ENCODE measurements at regions of chr11 and their contacts with region 1.

Region 1: DNA sequence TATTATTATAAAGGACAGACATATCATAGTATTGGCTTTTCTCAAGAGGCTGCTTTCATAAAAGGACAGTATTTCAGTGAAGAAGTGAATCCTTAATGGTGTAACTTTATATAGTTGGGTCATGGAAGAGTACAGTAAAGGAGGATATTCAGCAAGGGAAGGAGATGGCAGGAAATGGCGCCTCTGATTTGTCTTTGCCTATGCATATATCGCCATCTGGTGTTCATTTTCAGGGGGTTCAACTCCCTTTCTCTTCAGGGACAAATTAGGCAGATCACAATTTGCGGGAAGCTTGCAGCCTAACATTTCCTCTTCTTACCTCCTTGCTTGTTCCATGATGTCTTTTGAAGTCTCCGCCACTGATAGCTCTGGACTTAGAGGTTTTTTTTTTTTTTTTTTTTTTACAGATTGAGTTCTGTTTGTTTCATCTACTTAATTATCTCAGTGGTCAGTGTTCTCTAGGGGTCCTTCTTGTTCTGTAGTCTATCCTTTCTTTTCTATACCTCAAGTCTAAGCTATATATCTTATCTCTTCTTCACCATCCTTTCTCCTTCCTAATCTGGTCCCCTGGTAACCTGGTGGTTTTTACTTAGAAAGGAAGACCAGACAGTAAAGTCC is 21.8 kb upstream of the RRM1 start:
- DNase-seq: peak; percentile 62
- H3K4me3 Mint-ChIP-seq: no peak overlapping the region
- H3K27ac Mint-ChIP-seq: no peak overlapping the region
- H3K4me1 Mint-ChIP-seq: no peaks in the 10 kb centered on the region
- H3K27me3 Mint-ChIP-seq: no peaks in the 10 kb centered on the region
- CTCF ChIP-seq: peak; percentile 71

Region 2: DNA sequence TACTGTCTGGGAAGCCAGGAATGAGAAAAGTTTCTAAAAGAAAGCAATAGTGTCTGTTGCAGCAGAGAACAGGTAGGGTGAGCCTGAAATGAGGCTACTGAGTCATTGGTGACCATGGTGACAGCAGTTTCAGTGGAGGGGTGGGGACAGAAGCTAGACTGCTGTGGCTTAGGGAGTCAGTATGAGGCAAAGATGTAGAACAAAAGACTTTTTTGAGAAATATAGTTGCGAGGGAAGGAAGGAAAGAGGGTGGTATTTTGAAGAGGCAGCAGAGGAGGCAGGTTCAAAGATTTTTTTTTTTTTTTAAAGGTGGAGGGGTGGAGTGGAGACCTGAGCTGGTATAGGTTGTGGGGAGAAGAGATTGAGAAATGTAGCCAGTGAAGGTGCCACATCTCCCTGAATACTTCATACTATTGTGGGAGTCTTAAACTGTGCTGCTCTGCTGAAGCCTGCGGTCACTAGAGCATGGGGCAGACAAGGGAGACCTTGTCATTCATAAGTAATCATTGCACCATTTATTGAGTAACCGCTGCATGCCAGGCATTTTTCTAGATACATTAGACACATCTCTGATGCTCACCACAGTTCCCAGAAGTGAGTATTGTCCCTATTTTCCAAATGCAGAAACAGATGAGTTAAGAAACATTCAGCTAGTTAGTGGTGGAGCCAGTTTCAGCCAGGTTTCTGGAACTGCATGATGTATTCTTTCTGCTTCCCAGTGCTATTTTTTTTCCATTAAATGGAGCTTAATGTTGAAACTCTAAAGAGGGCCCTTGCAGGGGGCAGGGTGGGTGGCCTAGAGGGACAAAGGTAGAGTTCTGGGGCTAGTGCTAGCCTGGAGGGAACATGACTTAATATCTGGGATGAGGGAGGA is 167.5 kb before region 1 on chr11:
- CTCF ChIA-PET with region 1: no interaction called
- intact Hi-C with region 1: no loop called
- DNase-seq: peak; percentile 82
- H3K4me3 Mint-ChIP-seq: peak overlapping the region; percentile 56
- H3K27ac Mint-ChIP-seq: peak overlapping the region; percentile 95
- H3K4me1 Mint-ChIP-seq: peaks cover 60% of the 10 kb centered on the region
- H3K27me3 Mint-ChIP-seq: no peaks in the 10 kb centered on the region
- CTCF ChIP-seq: no peak

Region 3: GRCh38 chr11:3929649-3930048 is 143.1 kb before region 1 on chr11:
- CTCF ChIA-PET with region 1: no interaction called
- intact Hi-C with region 1: loop called (anchors 5 kb)
- DNase-seq: no peak
- H3K4me3 Mint-ChIP-seq: no peak overlapping the region
- H3K27ac Mint-ChIP-seq: no peak overlapping the region
- H3K4me1 Mint-ChIP-seq: peaks cover 9% of the 10 kb centered on the region
- H3K27me3 Mint-ChIP-seq: no peaks in the 10 kb centered on the region
- CTCF ChIP-seq: no peak

Region 4: DNA sequence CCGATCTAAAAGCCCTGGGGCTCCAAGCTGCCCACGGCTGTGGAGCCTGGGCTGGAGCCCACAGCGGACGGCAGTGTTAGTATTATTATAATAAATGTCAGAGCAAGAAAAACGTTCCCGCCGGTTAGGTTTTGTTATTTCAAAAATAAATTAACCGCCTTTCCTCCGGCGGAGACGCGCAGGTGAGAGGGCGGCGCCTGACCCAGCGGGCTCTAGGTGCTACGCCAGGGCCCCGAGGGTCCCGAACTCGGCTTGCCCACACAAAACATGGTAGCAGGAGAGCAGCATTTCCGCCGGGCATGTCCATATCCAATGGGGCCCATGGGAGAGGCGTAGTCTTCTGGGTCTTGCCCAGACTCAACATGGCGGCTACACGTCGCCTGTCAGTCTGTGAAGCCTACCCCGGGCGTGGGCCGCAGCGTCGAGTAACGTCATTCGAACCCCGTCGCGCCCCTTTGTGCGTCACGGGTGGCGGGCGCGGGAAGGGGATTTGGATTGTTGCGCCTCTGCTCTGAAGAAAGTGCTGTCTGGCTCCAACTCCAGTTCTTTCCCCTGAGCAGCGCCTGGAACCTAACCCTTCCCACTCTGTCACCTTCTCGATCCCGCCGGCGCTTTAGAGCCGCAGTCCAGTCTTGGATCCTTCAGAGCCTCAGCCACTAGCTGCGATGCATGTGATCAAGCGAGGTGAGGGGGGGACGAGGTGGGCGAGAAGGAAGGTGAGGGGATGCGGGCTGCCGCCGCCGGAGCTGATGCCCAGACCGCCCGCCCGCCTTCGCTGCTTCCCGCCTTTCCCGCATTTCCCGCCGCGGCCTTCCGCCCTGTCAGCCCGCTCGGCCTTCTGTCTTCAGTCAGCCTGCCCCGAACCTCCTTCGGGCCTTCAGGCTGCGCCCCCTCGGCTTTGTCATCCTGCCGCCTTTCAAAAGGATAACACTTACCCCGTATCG is 21.8 kb after region 1 on chr11 and contains the start of gene RRM1:
- CTCF ChIA-PET with region 1: no interaction called
- intact Hi-C with region 1: no loop called
- DNase-seq: peak; percentile 94
- H3K4me3 Mint-ChIP-seq: peak within 1 kb of the TSS; percentile 94
- H3K27ac Mint-ChIP-seq: peak within 1 kb of the TSS; percentile 91
- H3K4me1 Mint-ChIP-seq: peaks cover 13% of the 10 kb centered on the region
- H3K27me3 Mint-ChIP-seq: no peaks in the 10 kb centered on the region
- CTCF ChIP-seq: no peak
- total RNA-seq, gene RRM1: 80.2 and 83.2 TPM in 2 replicates